B cell (primary cell): ENCODE measurements at regions of chr20 and their contacts with region 1.

Region 1: GRCh38 chr20:3710703-3711483 is 1.5 kb downstream of the SIGLEC1 start:
- DNase-seq: peak; percentile 73
- ATAC-seq: peak; percentile 57
- H3K4me3 ChIP-seq: no peak overlapping the region
- H3K4me3 Mint-ChIP-seq: no peak overlapping the region
- H3K27ac ChIP-seq: no peak overlapping the region
- H3K27ac Mint-ChIP-seq: no peak overlapping the region
- H3K4me1 ChIP-seq: no peaks in the 10 kb centered on the region
- H3K4me1 Mint-ChIP-seq: no peaks in the 10 kb centered on the region
- H3K27me3 ChIP-seq: peaks cover 0 to 17% (median 0%) of the 10 kb centered on the region in 4 experiments
- H3K27me3 Mint-ChIP-seq: peaks cover 17% of the 10 kb centered on the region
- CTCF ChIP-seq: peak; percentile 95

Region 2: DNA sequence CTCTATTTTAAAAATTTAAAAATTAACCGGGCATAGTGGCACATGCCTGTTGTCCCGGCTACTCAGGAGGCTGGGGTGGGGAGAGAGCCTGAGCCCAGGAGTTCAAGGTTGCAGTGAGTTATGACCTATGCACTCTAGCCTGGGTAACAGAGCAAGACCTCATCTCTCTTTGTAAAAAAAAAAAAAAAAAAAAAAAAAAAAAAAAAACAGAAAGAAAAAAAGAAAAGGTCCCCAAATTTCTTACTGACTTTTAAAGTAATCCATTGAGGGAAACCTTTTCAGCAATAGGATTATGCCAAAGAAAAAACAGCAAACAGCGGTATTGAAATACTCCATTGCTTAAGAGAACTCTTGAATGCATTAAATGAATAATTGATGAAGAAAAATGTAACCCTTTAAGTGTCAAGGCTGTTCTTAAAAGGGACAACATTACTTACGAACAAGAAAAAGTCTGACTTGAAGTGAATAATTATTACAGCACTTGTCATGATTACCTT is 297.5 kb before region 1 on chr20:
- CTCF ChIA-PET with region 1: no interaction called
- POLR2A ChIA-PET with region 1: no interaction called
- intact Hi-C with region 1: no loop called
- DNase-seq: no peak
- ATAC-seq: no peak
- H3K4me3 ChIP-seq: no peak overlapping the region
- H3K4me3 Mint-ChIP-seq: no peak overlapping the region
- H3K27ac ChIP-seq: no peak overlapping the region
- H3K27ac Mint-ChIP-seq: no peak overlapping the region
- H3K4me1 ChIP-seq: peaks cover 2 to 5% of the 10 kb centered on the region in 2 donors
- H3K4me1 Mint-ChIP-seq: peaks cover 4% of the 10 kb centered on the region
- H3K27me3 ChIP-seq: peaks cover 0 to 4% (median 0%) of the 10 kb centered on the region in 4 experiments
- H3K27me3 Mint-ChIP-seq: peaks cover 20% of the 10 kb centered on the region
- CTCF ChIP-seq: no peak

Region 3: DNA sequence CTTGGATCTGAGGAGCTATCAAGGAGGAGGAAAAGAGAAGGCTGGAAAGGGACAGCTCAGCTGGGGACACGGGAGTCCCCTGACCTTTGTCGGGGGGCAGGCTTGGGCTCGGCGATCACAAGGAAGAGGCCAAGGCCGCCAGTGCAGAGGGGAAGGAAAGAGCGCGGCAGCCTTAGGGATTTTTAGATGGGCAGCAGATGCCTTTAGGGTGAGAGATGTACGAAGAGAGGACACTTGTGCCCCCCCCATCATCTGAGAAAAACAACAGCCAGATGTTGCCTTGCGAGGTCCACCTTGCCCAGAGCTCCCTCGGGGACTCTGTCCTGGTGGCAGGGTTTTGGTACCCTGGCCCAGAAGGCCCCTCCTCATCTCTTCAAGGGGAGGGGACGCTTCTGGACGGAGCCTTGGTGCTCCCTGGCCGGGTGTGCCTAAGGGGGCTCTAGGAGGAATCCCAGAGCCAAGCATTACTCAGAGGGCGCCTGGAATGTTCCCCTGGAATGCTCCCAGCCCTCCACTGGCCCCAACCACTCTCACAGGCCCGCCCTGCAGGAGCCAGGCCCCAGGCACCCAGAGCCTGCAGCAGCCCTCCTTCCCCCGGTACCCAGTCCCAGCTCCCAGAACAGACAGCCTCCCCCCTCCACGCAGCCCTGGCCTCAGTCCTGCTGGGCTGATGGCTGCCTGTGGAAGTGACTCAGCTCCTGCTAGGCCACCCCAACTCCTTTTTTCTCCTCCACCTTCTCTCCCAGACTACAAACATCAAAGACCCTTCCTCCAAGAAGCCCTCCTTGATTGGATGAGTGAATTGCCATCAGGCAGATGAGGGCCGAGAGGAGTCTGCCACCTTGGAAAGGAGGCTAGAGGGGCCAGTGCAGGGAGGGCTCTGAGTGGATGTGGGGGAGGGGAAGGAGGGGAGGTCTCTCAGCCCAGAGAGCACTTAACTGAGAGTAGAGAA is 30.9 kb before region 1 on chr20:
- CTCF ChIA-PET with region 1: interaction called, 13 read pairs
- POLR2A ChIA-PET with region 1: no interaction called
- intact Hi-C with region 1: loop called (anchors 2 kb)
- DNase-seq: no peak
- ATAC-seq: no peak
- H3K4me3 ChIP-seq: no peak overlapping the region
- H3K4me3 Mint-ChIP-seq: no peak overlapping the region
- H3K27ac ChIP-seq: no peak overlapping the region
- H3K27ac Mint-ChIP-seq: no peak overlapping the region
- H3K4me1 ChIP-seq: peaks cover 0 to 7% of the 10 kb centered on the region in 2 donors
- H3K4me1 Mint-ChIP-seq: peaks cover 4% of the 10 kb centered on the region
- H3K27me3 ChIP-seq: peaks cover 0 to 38% (median 6%) of the 10 kb centered on the region in 4 experiments
- H3K27me3 Mint-ChIP-seq: peaks cover 57% of the 10 kb centered on the region
- CTCF ChIP-seq: no peak

Region 4: GRCh38 chr20:3972151-3972550 is 261.3 kb after region 1 on chr20:
- CTCF ChIA-PET with region 1: no interaction called
- POLR2A ChIA-PET with region 1: no interaction called
- intact Hi-C with region 1: no loop called
- DNase-seq: no peak
- ATAC-seq: no peak
- H3K4me3 ChIP-seq: no peak overlapping the region
- H3K4me3 Mint-ChIP-seq: no peak overlapping the region
- H3K27ac ChIP-seq: no peak overlapping the region
- H3K27ac Mint-ChIP-seq: no peak overlapping the region
- H3K4me1 ChIP-seq: no peaks in the 10 kb centered on the region
- H3K4me1 Mint-ChIP-seq: no peaks in the 10 kb centered on the region
- H3K27me3 ChIP-seq: no peaks in the 10 kb centered on the region
- H3K27me3 Mint-ChIP-seq: no peaks in the 10 kb centered on the region
- CTCF ChIP-seq: no peak